ENCODE measurements at regions of chr17 and their contacts with region 1.

Region 1: GRCh38 chr17:76726231-76726775 is at the start of gene JMJD6:
- DNase-seq: peak; percentile 96
- H3K4me3 Mint-ChIP-seq: peak within 1 kb of the TSS; percentile 91
- H3K27ac Mint-ChIP-seq: peak within 1 kb of the TSS; percentile 93
- H3K4me1 Mint-ChIP-seq: peaks cover 27% of the 10 kb centered on the region
- H3K27me3 Mint-ChIP-seq: no peaks in the 10 kb centered on the region
- total RNA-seq, gene JMJD6: 83.5 and 84.9 TPM in 2 replicates

Region 2: DNA sequence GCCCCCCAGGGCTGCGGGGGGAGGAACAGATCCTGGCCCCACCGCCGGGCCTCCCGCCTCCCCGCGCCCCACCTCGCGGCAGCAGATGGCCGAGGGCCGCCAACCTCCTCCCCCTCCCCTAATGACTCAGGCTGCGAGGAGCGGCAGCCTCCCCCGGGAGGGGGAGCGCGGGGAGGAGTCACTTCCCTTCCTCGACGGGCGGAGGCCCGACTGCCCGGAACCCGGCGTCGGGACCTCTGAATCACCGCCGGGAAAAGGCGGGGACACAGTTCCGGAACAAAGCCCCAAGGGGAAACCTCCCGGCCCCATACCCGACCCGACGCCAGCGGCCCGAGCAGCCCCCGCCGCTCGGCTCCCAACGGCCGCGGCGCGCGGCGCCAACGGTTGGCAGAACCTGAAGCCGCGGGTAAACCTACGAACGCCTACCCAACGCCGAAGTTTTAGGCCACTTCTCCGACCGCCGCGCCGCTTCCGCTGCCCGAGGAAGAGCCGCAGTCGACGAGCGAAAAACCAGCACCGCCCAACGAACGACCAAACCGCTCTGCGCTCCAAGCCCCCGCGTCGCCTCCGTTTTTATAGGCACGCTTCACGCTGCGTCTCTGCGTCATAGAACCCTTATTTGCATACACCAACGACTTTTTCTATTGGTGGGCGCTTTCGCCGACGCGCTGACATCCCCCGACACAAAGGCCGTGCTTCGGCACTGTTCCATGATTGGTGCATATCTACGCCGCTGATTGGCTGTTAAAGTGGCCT is 946.9 kb before region 1 on chr17:
- intact Hi-C with region 1: loop called (anchors 5 kb)
- DNase-seq: peak; percentile 96
- H3K4me3 Mint-ChIP-seq: peak overlapping the region; percentile 97
- H3K27ac Mint-ChIP-seq: peak overlapping the region; percentile 98
- H3K4me1 Mint-ChIP-seq: peaks cover 37% of the 10 kb centered on the region
- H3K27me3 Mint-ChIP-seq: no peaks in the 10 kb centered on the region

Region 3: DNA sequence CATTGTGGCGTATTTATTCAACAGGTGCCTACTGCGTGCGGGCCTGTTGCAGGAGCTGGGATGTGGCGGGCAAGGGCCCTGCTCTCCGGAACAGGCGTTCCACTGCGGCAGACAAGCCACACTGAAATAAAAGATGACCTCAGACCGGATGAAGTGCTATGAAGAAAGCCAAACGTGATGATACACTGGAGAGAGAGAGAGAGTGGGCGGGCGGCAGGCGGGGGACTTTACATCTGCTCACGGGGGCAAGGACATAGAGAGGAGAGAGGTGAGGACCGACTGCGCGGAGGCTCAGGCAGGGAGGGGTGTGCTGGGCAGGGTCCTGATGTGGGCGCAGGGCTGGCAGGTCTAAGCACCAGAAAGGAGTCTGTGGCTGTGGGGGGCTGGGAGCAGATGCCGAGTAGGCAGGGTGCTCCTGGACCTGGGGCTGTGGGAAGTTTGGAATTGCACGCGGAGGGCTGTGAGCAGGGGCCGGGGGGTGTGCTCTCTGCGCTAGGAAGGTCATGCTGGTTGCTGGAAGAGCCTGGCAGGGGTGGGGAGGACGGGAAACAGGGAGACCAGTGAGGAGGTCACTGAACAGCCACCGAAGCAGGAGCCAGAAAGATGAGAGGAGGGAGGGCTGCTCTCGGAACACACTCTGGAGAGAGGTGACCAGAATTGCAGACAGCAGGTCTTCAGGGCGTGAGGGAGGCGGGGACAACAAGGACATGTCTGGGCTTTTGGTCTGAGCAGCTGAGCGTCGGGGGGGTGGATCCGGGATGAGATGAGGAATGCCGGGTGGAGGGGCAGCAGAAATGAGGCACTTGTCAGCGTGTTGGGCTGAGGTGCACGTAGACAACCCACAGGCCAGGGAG is 25.5 kb before region 1 on chr17:
- intact Hi-C with region 1: no loop called
- DNase-seq: no peak
- H3K4me3 Mint-ChIP-seq: no peak overlapping the region
- H3K27ac Mint-ChIP-seq: no peak overlapping the region
- H3K4me1 Mint-ChIP-seq: no peaks in the 10 kb centered on the region
- H3K27me3 Mint-ChIP-seq: peaks cover 4% of the 10 kb centered on the region

Region 4: GRCh38 chr17:76714822-76715495 is 11.3 kb before region 1 on chr17:
- intact Hi-C with region 1: loop called (anchors 1 kb)
- DNase-seq: peak; percentile 53
- H3K4me3 Mint-ChIP-seq: no peak overlapping the region
- H3K27ac Mint-ChIP-seq: peak overlapping the region; percentile 15
- H3K4me1 Mint-ChIP-seq: peaks cover 32% of the 10 kb centered on the region
- H3K27me3 Mint-ChIP-seq: no peaks in the 10 kb centered on the region

Region 5: GRCh38 chr17:76742958-76743357 is 16.7 kb after region 1 on chr17:
- intact Hi-C with region 1: no loop called
- DNase-seq: no peak
- H3K4me3 Mint-ChIP-seq: no peak overlapping the region
- H3K27ac Mint-ChIP-seq: no peak overlapping the region
- H3K4me1 Mint-ChIP-seq: peaks cover 19% of the 10 kb centered on the region
- H3K27me3 Mint-ChIP-seq: no peaks in the 10 kb centered on the region

Region 6: DNA sequence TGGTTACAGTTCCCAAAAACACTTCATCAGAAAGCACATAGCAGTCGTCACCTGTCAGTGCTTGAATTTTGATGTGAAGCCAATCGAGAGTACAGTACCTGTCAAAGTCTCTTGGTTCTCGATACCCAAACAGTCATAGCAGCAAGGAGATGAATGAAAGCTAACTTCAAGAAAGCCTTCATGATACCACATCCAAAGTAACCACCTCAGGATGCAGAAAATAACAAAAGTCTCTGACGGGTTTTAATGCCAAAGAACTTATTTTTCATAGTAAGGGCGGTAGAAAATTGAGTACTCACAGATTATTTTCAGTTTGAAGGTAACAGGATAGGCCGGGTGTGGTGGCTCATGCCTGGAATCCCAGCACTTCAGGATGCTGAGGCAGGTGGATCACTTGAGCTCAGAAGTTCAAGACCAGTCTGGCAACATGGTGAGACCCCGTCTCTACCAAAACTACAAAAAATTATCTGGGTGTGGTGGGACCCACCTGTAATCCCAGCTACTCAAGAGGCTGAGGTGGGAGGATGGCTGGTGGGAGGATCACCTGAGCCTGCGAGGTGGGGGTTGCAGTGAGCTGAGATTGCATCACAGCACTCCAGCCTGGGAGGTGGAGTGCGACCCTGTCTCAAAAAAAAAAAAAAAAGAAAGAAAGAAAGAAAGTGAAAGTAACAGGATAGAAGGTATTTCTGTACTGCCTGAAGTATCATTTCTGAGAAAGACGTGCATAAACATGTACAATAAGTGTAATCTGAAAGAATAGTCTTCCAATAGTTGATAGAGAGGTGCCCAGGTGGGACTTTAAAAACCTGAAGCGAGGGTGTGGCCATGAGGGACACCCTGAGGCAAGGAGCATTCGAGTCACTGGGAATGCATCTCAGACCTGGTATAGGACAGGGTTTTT is 27.0 kb after region 1 on chr17:
- intact Hi-C with region 1: loop called (anchors 1 kb)
- DNase-seq: peak; percentile 14
- H3K4me3 Mint-ChIP-seq: peak overlapping the region; percentile 83
- H3K27ac Mint-ChIP-seq: peak overlapping the region; percentile 84
- H3K4me1 Mint-ChIP-seq: peaks cover 19% of the 10 kb centered on the region
- H3K27me3 Mint-ChIP-seq: no peaks in the 10 kb centered on the region

Measured in activated T-helper 2 cell treated with anti-CD3 and anti-CD28 coated beads, Interferon-gamma antibody, Interleukin-2, Interleukin-4, amounts not matched to agents 10 μg/mL and 5 μg/mL and 100 μg/mL, durations not matched to agents 14 hours and 24 hours and 36 hours (primary cell).